Posterior vena cava (tissue), 2 donors: ENCODE measurements at regions of chr15 and their contacts with region 1.

Region 1: DNA sequence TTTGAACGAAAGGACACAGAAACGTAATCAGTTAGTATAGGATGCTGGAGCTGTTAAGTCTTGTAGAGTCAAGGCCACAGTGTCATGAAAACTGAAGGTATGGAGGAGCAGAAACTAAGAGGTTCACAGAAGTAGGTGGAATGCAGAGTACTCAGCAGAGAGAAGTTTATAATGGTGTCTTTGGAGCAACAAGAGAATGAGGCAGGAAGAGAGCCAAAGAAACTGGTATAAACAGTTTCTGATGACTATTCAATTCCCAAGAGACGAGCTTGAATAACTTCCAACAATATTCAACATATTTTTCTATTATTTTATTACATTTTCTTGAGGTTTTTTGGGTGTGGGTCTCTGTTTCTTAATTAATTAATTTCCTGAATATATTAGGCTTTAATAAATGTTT is 29.6 kb downstream of the GALK2 start:
- DNase-seq: no peak

Region 2: DNA sequence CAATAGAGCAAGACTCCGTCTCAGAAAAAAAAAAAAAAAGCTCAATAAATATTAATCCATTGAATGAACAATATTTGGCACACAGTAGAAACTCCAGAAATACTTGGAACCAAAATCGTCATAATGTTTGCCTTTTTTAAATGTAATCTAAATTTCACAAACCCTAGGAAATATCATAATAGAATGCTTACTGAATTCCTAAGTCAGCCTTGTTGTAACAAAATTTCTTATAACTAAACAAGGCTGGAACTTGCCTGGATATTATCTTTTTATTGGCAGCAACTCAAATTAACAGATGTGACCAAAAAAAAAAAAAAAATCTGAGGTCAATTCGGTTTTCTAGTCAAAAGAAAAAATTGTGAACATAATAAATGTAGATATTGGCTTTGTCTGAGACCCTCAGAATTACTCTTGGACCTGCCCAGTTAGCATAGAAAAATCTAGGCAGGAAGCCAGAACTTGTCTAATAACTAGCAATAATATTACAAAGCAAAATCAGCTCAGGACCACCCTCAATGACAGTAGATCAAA is 1122.1 kb after region 1 on chr15:
- intact Hi-C with region 1: loop called in 1 of 2 experiments (anchors 10 kb)
- DNase-seq: no peak